Activated B cell treated with CpG ODN at 0.5 μM for 24 hours (primary cell): ENCODE measurements at regions of chr11 and their contacts with region 1.

Region 1: GRCh38 chr11:86291466-86292262 is 10.4 kb upstream of the HIKESHI start:
- DNase-seq: no peak
- ATAC-seq: peak; percentile 44
- H3K4me3 Mint-ChIP-seq: no peak overlapping the region
- H3K27ac Mint-ChIP-seq: no peak overlapping the region
- H3K4me1 Mint-ChIP-seq: peaks cover 35% of the 10 kb centered on the region
- H3K27me3 Mint-ChIP-seq: no peaks in the 10 kb centered on the region
- CTCF ChIP-seq: peak; percentile 34

Region 2: DNA sequence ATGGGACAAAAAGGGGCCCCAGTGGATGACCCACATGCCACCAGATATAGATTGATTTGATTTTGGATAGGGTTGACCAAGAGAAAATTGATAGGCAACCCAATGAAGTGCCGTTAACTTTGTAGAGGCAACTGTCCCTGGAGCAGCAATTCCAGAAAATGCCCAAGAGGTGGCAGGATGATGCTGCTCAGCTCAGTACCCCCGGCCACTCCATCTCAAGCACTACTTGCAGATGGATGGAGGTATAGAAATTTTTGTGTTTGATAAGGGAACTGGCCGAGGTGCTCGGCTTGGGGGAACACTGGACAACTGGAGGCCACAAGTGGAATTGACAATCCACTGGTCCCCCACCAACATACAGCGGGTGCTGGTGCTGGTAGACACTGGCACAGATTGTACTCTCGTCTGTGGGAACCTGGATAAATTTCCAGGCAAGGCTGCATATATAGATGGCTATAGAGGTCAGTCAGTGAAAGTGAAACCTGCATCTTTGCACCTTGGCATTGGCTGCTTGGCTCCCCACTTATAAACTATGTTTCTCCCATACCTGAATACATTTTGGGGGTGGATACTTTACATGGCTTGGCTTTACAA is 350.2 kb before region 1 on chr11:
- CTCF ChIA-PET with region 1: no interaction called
- POLR2A ChIA-PET with region 1: no interaction called
- intact Hi-C with region 1: loop called (anchors 1 kb)
- DNase-seq: no peak
- ATAC-seq: no peak
- H3K4me3 Mint-ChIP-seq: no peak overlapping the region
- H3K27ac Mint-ChIP-seq: no peak overlapping the region
- H3K4me1 Mint-ChIP-seq: no peaks in the 10 kb centered on the region
- H3K27me3 Mint-ChIP-seq: no peaks in the 10 kb centered on the region
- CTCF ChIP-seq: no peak

Region 3: GRCh38 chr11:86193297-86194095 is 98.2 kb before region 1 on chr11:
- CTCF ChIA-PET with region 1: interaction called, 7 read pairs
- POLR2A ChIA-PET with region 1: interaction called, 8 read pairs
- intact Hi-C with region 1: loop called (anchors 2 kb)
- DNase-seq: peak; percentile 48
- ATAC-seq: peak; percentile 96
- H3K4me3 Mint-ChIP-seq: peak overlapping the region; percentile 76
- H3K27ac Mint-ChIP-seq: peak overlapping the region; percentile 92
- H3K4me1 Mint-ChIP-seq: peaks cover 30% of the 10 kb centered on the region
- H3K27me3 Mint-ChIP-seq: no peaks in the 10 kb centered on the region
- CTCF ChIP-seq: peak; percentile 50

Region 4: DNA sequence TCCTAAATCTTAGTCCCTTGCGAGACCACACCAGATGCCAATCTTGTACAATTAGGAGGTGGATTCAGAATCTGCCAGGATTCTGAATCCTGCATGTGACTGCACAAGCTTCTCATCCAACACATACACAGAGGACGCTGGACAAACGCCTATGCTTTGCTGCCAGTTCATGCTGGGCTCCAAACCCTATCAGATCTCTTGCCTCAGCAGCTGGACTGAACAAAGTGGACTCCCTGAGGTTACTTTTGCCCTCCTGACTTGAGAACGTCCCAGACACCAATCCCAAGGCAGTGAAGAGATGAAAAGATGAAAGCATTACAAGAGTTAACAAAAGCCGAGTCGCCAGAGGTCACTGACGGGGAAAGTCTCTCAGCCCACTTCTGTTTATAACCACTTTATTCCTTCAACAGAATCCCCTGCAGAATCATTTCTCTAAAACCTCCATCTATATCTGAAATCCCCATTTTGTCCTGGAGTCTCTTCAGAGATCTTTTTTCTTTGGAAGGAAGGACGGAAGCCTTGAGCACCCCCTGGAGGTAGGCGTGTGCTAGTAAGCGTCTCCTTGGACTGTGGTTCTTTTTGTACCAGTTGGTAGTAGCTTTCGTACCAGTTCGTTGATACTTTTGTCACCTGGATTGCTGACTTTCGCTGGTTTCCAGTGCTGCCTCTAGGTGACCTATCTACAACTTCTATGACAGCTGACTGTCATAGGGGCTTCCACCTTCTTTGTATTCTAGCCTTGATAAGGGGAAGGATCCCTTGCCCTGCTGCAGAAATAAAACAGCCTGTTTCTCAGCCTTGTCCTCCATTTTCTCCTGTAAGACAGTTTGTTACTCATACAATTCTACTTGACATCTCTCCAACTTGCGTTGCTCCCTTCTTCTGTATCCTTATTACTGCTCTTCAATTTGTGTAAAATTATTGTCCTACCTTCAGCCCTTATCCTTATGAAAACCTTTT is 73.3 kb before region 1 on chr11:
- CTCF ChIA-PET with region 1: interaction called, 6 read pairs
- POLR2A ChIA-PET with region 1: interaction called, 7 read pairs
- intact Hi-C with region 1: loop called (anchors 1 kb)
- DNase-seq: no peak
- ATAC-seq: peak; percentile 22
- H3K4me3 Mint-ChIP-seq: peak overlapping the region; percentile 69
- H3K27ac Mint-ChIP-seq: peak overlapping the region; percentile 94
- H3K4me1 Mint-ChIP-seq: peaks cover 48% of the 10 kb centered on the region
- H3K27me3 Mint-ChIP-seq: no peaks in the 10 kb centered on the region
- CTCF ChIP-seq: peak; percentile 32

Region 5: DNA sequence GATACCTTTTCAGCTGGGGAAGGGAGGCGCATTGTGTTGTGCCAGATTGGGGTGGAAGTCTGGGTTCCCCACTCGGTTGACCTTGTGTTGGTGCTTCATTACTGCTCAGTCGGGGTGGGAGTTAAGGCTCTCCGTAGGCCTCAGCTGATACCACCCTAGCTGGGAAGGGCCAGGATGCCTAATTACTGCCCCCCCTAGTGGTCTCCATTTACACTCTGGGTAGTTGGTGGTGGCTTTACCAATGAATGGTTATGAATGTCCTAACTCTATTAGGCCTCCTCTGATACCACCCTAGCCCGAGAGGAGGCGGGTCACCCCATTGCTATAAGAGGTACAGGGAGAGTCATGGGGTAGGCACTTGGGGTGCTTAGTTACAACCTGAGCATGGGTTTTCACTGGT is 17.2 kb before region 1 on chr11:
- CTCF ChIA-PET with region 1: no interaction called
- POLR2A ChIA-PET with region 1: interaction called, 5 read pairs
- intact Hi-C with region 1: loop called (anchors 2 kb)
- DNase-seq: no peak
- ATAC-seq: no peak
- H3K4me3 Mint-ChIP-seq: no peak overlapping the region
- H3K27ac Mint-ChIP-seq: no peak overlapping the region
- H3K4me1 Mint-ChIP-seq: peaks cover 20% of the 10 kb centered on the region
- H3K27me3 Mint-ChIP-seq: no peaks in the 10 kb centered on the region
- CTCF ChIP-seq: no peak

Region 6: DNA sequence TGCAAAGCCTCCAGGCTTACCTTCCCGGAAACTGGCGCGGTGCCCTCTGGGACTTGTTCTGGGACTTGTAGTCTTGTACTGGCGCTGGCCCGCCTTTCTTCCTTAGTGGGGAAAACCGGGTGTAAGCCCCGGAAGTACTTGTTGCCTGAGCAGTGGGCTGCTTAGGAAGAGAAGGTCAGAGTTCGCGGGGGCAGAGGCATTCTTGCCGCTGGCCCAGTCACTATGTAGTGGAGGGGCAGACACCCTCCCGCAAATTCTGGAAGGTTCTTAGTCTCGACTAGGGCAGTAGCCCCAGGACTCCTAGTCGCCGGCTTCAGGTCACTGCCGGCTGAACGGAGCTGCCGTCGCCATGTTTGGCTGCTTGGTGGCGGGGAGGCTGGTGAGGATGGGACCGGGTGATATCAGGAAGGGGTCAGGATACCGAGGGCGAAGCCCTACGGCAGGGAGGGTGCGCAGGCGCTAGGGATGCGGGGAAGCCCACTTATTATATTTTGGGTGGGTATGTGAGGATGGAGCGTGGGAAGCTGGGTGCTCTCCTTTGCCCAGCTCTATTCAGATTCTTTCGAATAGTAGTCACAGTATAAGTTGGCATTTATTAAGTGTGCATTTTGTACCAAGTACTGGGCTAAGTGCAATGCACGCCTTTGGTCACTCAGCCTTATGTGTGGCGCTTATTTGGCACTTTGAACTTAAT is 10.6 kb after region 1 on chr11 and contains the start of gene HIKESHI:
- CTCF ChIA-PET with region 1: interaction called, 7 read pairs
- POLR2A ChIA-PET with region 1: interaction called, 8 read pairs
- intact Hi-C with region 1: loop called (anchors 1 kb)
- DNase-seq: peak; percentile 72
- ATAC-seq: peak; percentile 98
- H3K4me3 Mint-ChIP-seq: peak within 1 kb of the TSS; percentile 99
- H3K27ac Mint-ChIP-seq: peak within 1 kb of the TSS; percentile 94
- H3K4me1 Mint-ChIP-seq: peaks cover 27% of the 10 kb centered on the region
- H3K27me3 Mint-ChIP-seq: no peaks in the 10 kb centered on the region
- CTCF ChIP-seq: no peak
- total RNA-seq, gene HIKESHI: 33.8 and 35.6 TPM in 2 replicates